Mammary epithelial cell (primary cell): ENCODE measurements at regions of chr17 and their contacts with region 1.

Region 1: DNA sequence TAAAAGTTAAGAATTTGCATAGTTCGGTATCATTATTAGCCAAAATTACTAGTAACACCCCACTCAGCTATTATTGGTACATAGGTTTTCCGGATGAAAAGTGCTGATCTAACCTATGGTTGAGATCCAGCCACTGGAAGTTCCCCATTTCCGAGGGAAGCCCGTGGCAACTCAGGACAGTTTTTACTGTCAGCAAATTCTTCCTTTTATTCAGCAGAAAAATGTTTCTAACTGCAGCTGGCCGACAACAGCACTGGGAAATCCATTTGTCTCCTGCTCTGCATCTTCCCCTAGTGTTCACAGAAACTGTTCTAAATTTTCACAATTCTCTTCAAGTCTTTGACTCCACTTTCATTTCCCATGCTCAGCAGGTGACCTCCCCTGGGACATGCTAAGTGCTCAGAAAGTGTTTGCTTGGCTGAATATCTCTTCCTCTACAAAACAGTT is 15.5 kb upstream of the MMD start:
- DNase-seq: no peak
- H3K4me3 ChIP-seq: no peak overlapping the region
- H3K27ac ChIP-seq: no peak overlapping the region
- H3K4me1 ChIP-seq: peaks cover 46% of the 10 kb centered on the region
- H3K27me3 ChIP-seq: no peaks in the 10 kb centered on the region
- CTCF ChIP-seq: no peak

Region 2: GRCh38 chr17:55190748-55191147 is 246.4 kb before region 1 on chr17:
- CTCF ChIA-PET with region 1: no interaction called
- dilution Hi-C with region 1: no loop called
- in situ Hi-C with region 1: no loop called
- intact Hi-C with region 1: no loop called
- DNase-seq: no peak
- H3K4me3 ChIP-seq: no peak overlapping the region
- H3K27ac ChIP-seq: no peak overlapping the region
- H3K4me1 ChIP-seq: no peaks in the 10 kb centered on the region
- H3K27me3 ChIP-seq: no peaks in the 10 kb centered on the region
- CTCF ChIP-seq: no peak

Region 3: GRCh38 chr17:55421179-55421934 is 15.8 kb before region 1 on chr17 and contains the start of gene MMD:
- CTCF ChIA-PET with region 1: no interaction called
- dilution Hi-C with region 1: no loop called
- in situ Hi-C with region 1: no loop called
- intact Hi-C with region 1: loop called (anchors 1 kb)
- DNase-seq: peak; percentile 63
- H3K4me3 ChIP-seq: peak within 1 kb of the TSS; percentile 84 to 92 (median 85)
- H3K27ac ChIP-seq: peak within 1 kb of the TSS; percentile 89
- H3K4me1 ChIP-seq: peaks cover 10% of the 10 kb centered on the region
- H3K27me3 ChIP-seq: no peaks in the 10 kb centered on the region
- CTCF ChIP-seq: no peak
- total RNA-seq, gene MMD: 7.8 to 9.0 TPM

Region 4: GRCh38 chr17:55458977-55459376 is 21.8 kb after region 1 on chr17:
- CTCF ChIA-PET with region 1: no interaction called
- dilution Hi-C with region 1: no loop called
- in situ Hi-C with region 1: no loop called
- intact Hi-C with region 1: loop called (anchors 2 kb)
- DNase-seq: peak; percentile 87
- H3K4me3 ChIP-seq: no peak overlapping the region
- H3K27ac ChIP-seq: peak overlapping the region; percentile 38
- H3K4me1 ChIP-seq: peaks cover 10% of the 10 kb centered on the region
- H3K27me3 ChIP-seq: no peaks in the 10 kb centered on the region
- CTCF ChIP-seq: no peak

Region 5: GRCh38 chr17:55496094-55496881 is 59.1 kb after region 1 on chr17:
- CTCF ChIA-PET with region 1: no interaction called
- dilution Hi-C with region 1: no loop called
- in situ Hi-C with region 1: no loop called
- intact Hi-C with region 1: loop called (anchors 5 kb)
- DNase-seq: peak; percentile 67
- H3K4me3 ChIP-seq: no peak overlapping the region
- H3K27ac ChIP-seq: no peak overlapping the region
- H3K4me1 ChIP-seq: no peaks in the 10 kb centered on the region
- H3K27me3 ChIP-seq: no peaks in the 10 kb centered on the region
- CTCF ChIP-seq: no peak

Region 6: DNA sequence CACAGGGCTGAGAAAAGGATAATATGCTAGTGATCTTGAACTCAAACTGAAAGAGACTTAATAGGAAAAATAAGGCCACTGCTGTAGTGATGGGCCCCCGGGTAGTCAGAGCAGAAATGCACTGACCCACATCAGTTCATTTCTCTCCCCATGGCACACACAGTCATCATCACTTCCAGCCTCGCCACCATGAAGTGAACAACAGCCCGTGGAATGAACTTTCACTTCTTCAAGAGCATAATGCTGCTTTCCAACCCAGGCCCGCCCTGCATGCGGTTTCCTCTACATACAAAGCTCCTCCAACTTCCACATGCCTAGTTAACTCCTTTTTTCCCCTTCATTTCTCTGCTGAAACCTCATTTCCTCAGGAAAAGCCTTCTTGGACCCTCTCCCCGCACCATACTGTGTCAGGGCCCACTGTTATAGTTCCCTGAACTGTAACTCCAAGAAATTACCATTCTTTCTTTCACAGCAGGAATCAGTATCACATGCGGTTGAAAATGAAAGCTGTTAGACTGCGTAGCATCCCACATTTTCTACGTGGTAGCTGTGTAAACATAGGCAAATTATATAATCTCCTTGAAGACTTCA is 139.9 kb after region 1 on chr17:
- CTCF ChIA-PET with region 1: no interaction called
- dilution Hi-C with region 1: no loop called
- in situ Hi-C with region 1: no loop called
- intact Hi-C with region 1: loop called (anchors 2 kb)
- DNase-seq: peak; percentile 84
- H3K4me3 ChIP-seq: peak overlapping the region in 2 of 3 experiments; percentile 24 to 30
- H3K27ac ChIP-seq: peak overlapping the region; percentile 90
- H3K4me1 ChIP-seq: peaks cover 25% of the 10 kb centered on the region
- H3K27me3 ChIP-seq: no peaks in the 10 kb centered on the region
- CTCF ChIP-seq: no peak